GM13977 (cell line): ENCODE measurements at regions of chr3 and their contacts with region 1.

Region 1: GRCh38 chr3:69161587-69162307 is 39.4 kb upstream of the LMOD3 start:
- DNase-seq: peak; percentile 62
- CTCF ChIP-seq: peak; percentile 88

Region 2: DNA sequence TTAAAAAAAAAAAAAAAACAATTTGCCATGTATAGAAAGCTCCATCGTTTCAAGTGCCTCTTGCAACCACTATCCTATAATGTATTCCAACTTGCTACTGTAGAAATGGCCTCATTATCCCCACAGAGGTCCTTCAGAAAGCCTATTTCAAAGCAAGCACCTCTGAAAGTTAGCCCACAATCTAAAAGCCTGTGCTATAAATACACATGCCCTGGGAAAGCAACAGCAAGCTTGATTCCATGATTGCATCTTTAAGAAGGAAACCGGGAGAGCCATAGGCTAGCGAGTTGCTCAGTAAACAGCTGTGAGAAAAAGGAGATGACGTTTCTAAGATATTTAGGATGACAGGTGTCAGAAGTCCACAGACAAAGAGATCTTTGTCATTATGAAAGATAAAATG is 257.7 kb before region 1 on chr3:
- in situ Hi-C with region 1: no loop called
- DNase-seq: no peak
- CTCF ChIP-seq: no peak

Region 3: GRCh38 chr3:69306239-69307185 is 144.8 kb after region 1 on chr3:
- in situ Hi-C with region 1: loop called (anchors 10 kb)
- DNase-seq: peak; percentile 50
- CTCF ChIP-seq: peak; percentile 94

Region 4: GRCh38 chr3:69425261-69425660 is 263.5 kb after region 1 on chr3:
- in situ Hi-C with region 1: loop called (anchors 10 kb)
- DNase-seq: peak; percentile 46
- CTCF ChIP-seq: peak; percentile 68

Region 5: GRCh38 chr3:69671082-69671952 is 509.6 kb after region 1 on chr3:
- in situ Hi-C with region 1: loop called (anchors 25 kb)
- DNase-seq: peak; percentile 55
- CTCF ChIP-seq: peak; percentile 60